ENCODE measurements at regions of chr20 and their contacts with region 1.

Region 1: DNA sequence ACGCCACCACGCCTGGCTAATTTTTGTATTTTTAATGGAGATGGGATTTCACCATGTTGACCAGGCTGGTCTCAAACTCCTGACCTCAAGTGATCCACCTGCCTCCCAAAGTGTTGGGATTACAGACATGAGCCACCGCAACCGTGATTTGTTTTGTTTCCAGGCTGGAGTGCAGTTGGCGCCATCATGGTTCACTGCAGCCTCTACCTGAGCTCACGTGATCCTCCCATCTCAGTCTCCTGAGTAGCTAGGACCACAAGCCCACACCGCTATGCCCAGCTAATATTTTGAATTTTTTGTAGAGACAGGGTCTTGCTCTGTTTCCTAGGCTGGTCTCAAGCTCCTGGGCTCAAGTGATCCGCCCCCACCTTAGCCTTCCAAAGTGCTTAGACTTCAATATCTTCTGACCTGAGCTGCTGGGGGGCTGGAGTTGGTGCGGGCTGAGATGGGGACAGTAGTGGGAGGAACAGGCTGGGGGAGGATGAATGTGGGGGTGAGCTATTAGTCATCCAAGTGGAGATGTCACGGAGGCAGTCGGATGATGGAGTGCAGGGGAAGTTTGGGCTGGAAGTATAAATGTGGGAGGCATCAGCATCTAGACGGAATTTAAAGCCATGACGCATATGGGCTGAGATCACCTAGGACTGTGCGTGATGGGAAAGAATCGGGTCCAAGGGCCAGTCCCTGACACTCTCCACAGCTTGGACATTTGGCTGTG is 23.1 kb upstream of the ZMYND8 start:
- DNase-seq: peak; percentile 63
- H3K4me3 Mint-ChIP-seq: no peak overlapping the region
- H3K27ac Mint-ChIP-seq: no peak overlapping the region
- H3K4me1 Mint-ChIP-seq: peaks cover 14% of the 10 kb centered on the region
- H3K27me3 Mint-ChIP-seq: no peaks in the 10 kb centered on the region
- CTCF ChIP-seq: no peak

Region 2: GRCh38 chr20:46752728-46753127 is 626.9 kb before region 1 on chr20:
- CTCF ChIA-PET with region 1: interaction called, 93 read pairs
- POLR2A ChIA-PET with region 1: interaction called, 5 read pairs
- intact Hi-C with region 1: no loop called
- DNase-seq: peak; percentile 61
- H3K4me3 Mint-ChIP-seq: no peak overlapping the region
- H3K27ac Mint-ChIP-seq: no peak overlapping the region
- H3K4me1 Mint-ChIP-seq: peaks cover 5% of the 10 kb centered on the region
- H3K27me3 Mint-ChIP-seq: peaks cover 15% of the 10 kb centered on the region
- CTCF ChIP-seq: peak; percentile 59

Region 3: DNA sequence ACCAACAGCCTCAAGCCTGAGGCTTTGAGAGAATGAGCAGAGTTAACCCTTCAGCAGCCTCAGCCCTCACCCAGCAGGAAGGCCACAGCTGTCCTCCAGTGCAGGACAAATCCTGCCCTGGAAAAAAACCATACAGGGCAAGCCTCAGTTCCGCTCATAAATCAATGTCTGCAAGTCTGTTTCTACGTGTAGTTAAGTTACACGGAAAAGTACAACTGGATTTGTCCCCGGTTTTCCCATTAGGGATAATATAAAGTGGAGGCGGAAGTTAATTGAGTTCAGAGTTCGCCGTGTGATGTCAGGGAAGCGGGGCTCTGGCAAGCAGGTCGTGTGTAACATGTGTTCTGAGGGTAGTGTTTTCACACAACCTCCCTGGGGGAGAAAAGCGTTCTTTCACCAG is 529.2 kb before region 1 on chr20:
- CTCF ChIA-PET with region 1: no interaction called
- POLR2A ChIA-PET with region 1: no interaction called
- intact Hi-C with region 1: no loop called
- DNase-seq: no peak
- H3K4me3 Mint-ChIP-seq: no peak overlapping the region
- H3K27ac Mint-ChIP-seq: no peak overlapping the region
- H3K4me1 Mint-ChIP-seq: no peaks in the 10 kb centered on the region
- H3K27me3 Mint-ChIP-seq: no peaks in the 10 kb centered on the region
- CTCF ChIP-seq: no peak

Region 4: GRCh38 chr20:47213966-47214365 is 165.6 kb before region 1 on chr20:
- CTCF ChIA-PET with region 1: interaction called, 41 read pairs
- POLR2A ChIA-PET with region 1: no interaction called
- intact Hi-C with region 1: no loop called
- DNase-seq: no peak
- H3K4me3 Mint-ChIP-seq: no peak overlapping the region
- H3K27ac Mint-ChIP-seq: no peak overlapping the region
- H3K4me1 Mint-ChIP-seq: peaks cover 5% of the 10 kb centered on the region
- H3K27me3 Mint-ChIP-seq: no peaks in the 10 kb centered on the region
- CTCF ChIP-seq: no peak

Region 5: DNA sequence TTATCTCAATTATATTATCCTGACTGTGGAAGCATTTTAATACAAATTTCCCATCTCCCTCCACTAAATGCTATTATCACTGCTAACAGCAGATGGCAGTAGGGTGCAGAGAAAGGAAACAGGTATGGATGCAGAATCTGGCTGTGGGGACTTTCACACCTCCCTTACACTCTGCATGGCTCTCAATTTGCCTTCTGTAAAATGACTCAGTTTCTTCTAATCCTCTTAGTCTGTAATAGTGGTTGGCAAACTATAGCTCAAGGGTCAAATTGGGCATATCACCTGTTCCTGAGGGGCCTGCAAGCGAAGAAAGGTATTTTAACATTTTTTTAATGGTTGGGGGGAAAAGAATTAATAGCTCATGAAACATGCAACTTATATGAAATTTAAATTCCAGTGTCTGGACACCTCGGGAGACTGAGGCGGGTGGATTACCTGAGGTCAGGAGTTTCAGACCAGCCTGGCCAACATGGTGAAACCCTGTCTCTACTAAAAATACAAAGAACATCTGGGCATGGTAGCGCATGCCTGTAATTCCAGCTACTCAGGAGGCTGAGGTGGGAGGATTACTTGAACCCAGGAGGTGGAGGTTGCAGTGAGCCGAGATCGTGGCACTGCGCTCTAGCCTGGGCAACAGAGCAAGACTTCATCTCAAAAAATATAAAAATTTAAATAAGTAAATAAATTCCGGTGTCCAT is 106.5 kb before region 1 on chr20:
- CTCF ChIA-PET with region 1: interaction called, 581 read pairs
- POLR2A ChIA-PET with region 1: interaction called, 135 read pairs
- intact Hi-C with region 1: loop called (anchors 1 kb)
- DNase-seq: peak; percentile 89
- H3K4me3 Mint-ChIP-seq: peak overlapping the region; percentile 52
- H3K27ac Mint-ChIP-seq: peak overlapping the region; percentile 99
- H3K4me1 Mint-ChIP-seq: peaks cover 37% of the 10 kb centered on the region
- H3K27me3 Mint-ChIP-seq: no peaks in the 10 kb centered on the region
- CTCF ChIP-seq: peak; percentile 66

Region 6: GRCh38 chr20:47309909-47310308 is 69.7 kb before region 1 on chr20:
- CTCF ChIA-PET with region 1: interaction called, 31 read pairs
- POLR2A ChIA-PET with region 1: interaction called, 53 read pairs
- intact Hi-C with region 1: loop called (anchors 5 kb)
- DNase-seq: no peak
- H3K4me3 Mint-ChIP-seq: no peak overlapping the region
- H3K27ac Mint-ChIP-seq: peak overlapping the region; percentile 54
- H3K4me1 Mint-ChIP-seq: peaks cover 21% of the 10 kb centered on the region
- H3K27me3 Mint-ChIP-seq: no peaks in the 10 kb centered on the region
- CTCF ChIP-seq: no peak

Region 7: GRCh38 chr20:47356526-47357295 is 22.9 kb before region 1 on chr20 and contains the start of gene ZMYND8:
- CTCF ChIA-PET with region 1: interaction called, 82 read pairs
- POLR2A ChIA-PET with region 1: interaction called, 307 read pairs
- intact Hi-C with region 1: no loop called
- DNase-seq: peak; percentile 94
- H3K4me3 Mint-ChIP-seq: peak within 1 kb of the TSS; percentile 70
- H3K27ac Mint-ChIP-seq: no peak within 1 kb of the TSS
- H3K4me1 Mint-ChIP-seq: peaks cover 72% of the 10 kb centered on the region
- H3K27me3 Mint-ChIP-seq: no peaks in the 10 kb centered on the region
- CTCF ChIP-seq: no peak
- total RNA-seq, gene ZMYND8: 126 and 127 TPM in 2 replicates

Region 8: GRCh38 chr20:47432211-47433210 is 52.9 kb after region 1 on chr20:
- CTCF ChIA-PET with region 1: interaction called, 11 read pairs
- POLR2A ChIA-PET with region 1: interaction called, 9 read pairs
- intact Hi-C with region 1: no loop called
- DNase-seq: peak; percentile 94
- H3K4me3 Mint-ChIP-seq: peak overlapping the region; percentile 66
- H3K27ac Mint-ChIP-seq: peak overlapping the region; percentile 99
- H3K4me1 Mint-ChIP-seq: peaks cover 27% of the 10 kb centered on the region
- H3K27me3 Mint-ChIP-seq: no peaks in the 10 kb centered on the region
- CTCF ChIP-seq: no peak